CD8-positive, alpha-beta T cell (primary cell): ENCODE measurements at regions of chr16 and their contacts with region 1.

Region 1: DNA sequence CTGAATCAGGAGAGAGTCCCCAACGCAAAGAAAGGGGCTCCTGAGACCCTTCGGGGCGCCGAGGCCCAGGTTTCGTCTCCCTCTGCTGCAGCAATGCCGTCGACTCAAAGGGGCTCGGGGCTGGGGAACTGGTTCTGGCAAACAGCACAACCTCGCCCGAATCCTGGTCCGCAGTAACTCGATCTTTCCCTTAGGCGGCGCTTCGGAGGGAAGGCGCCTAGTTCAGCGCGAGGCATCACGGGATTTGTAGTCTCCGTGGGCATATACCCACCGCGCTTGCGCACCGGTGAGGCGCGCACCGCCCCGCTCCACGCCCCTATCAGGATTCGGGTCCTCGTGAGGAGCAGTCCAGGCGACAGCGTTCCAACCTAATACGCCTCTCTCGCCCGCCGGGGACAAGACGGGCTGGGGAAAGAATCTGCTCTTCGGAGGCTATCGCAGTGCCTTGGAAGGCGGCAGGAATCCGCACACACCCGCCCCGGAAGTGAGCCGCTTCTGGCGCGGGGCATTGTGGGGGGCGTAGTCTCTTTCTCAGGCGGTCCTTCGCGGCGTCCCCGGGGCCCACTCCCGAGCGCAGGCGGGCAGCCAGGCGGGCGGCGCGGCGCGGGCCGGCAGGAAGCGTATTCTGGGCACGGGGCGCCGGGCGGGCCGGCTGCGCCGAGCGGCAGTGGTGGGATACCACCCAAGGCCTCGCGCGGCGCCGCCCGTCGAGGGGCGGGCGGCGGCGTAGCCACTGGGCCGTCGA is at the start of gene THAP11:
- DNase-seq: peak; percentile 91 to 97 (median 94)
- ATAC-seq: peak; percentile 62
- H3K4me3 ChIP-seq: peak within 1 kb of the TSS; percentile 97 to 100
- H3K4me3 Mint-ChIP-seq: peak within 1 kb of the TSS; percentile 95
- H3K27ac ChIP-seq: peak within 1 kb of the TSS; percentile 53 to 99
- H3K27ac Mint-ChIP-seq: peak within 1 kb of the TSS; percentile 96
- H3K4me1 ChIP-seq: peaks cover 39% of the 10 kb centered on the region
- H3K4me1 Mint-ChIP-seq: peaks cover 41% of the 10 kb centered on the region
- H3K27me3 ChIP-seq: no peaks in the 10 kb centered on the region
- H3K27me3 Mint-ChIP-seq: no peaks in the 10 kb centered on the region
- CTCF ChIP-seq: peak; percentile 79
- total RNA-seq, gene THAP11: 25.1 to 26.0 TPM

Region 2: GRCh38 chr16:67480833-67481560 is 360.9 kb before region 1 on chr16 and contains the start of gene ATP6V0D1:
- CTCF ChIA-PET with region 1: no interaction called
- POLR2A ChIA-PET with region 1: no interaction called
- intact Hi-C with region 1: loop called in 1 of 2 experiments (anchors 1 kb)
- DNase-seq: peak; percentile 98 to 99 (median 99)
- ATAC-seq: peak; percentile 90
- H3K4me3 ChIP-seq: peak within 1 kb of the TSS; percentile 91 to 100
- H3K4me3 Mint-ChIP-seq: peak within 1 kb of the TSS; percentile 99
- H3K27ac ChIP-seq: peak within 1 kb of the TSS; percentile 96 to 100
- H3K27ac Mint-ChIP-seq: peak within 1 kb of the TSS; percentile 99
- H3K4me1 ChIP-seq: peaks cover 30% of the 10 kb centered on the region
- H3K4me1 Mint-ChIP-seq: peaks cover 49% of the 10 kb centered on the region
- H3K27me3 ChIP-seq: no peaks in the 10 kb centered on the region
- H3K27me3 Mint-ChIP-seq: no peaks in the 10 kb centered on the region
- CTCF ChIP-seq: peak; percentile 87
- total RNA-seq, gene ATP6V0D1: 56.3 to 62.0 TPM

Region 3: DNA sequence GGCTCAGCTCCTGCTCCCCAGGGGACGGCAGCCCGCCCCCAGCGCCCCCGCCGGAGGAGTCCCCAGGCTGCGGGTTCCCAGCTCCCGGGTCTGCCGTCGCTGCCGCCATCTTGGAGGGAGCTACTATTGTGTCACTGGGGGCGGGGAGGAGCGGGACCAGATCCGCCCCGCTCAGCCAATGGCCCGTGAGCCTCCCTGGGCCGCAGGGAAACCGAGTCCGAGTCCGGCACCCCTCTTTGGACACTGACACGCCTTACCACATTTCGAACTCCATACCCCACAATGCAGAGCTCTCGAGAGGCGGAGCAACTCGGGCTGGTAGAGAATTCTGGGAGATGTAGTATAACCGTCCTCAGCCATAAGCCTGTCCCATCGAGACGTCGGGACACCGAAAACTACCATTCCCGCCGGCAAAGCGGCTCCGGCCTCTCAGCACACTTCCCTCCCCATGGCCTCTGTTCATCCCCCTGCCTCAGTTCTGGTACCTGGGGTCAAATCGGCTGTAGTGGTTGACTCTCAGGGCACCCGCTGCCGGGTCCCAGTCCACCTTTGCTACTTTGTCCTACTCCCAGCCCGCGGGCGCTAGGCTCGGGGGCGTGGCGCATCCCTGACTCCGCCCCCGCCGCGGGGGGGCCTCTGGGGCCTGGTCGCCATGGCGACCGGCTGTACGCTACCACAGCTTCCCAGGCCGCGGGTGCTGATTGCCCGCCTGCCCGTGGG is 35.3 kb before region 1 on chr16 and contains the starts of genes RANBP10 and TSNAXIP1:
- CTCF ChIA-PET with region 1: interaction called, 3 read pairs
- POLR2A ChIA-PET with region 1: interaction called, 7 read pairs
- intact Hi-C with region 1: loop called (anchors 1 kb)
- DNase-seq: peak; percentile 92 to 99 (median 94)
- ATAC-seq: peak; percentile 91
- H3K4me3 ChIP-seq: peak within 1 kb of the TSS; percentile 89 to 96
- H3K4me3 Mint-ChIP-seq: peak within 1 kb of the TSS; percentile 95
- H3K27ac ChIP-seq: peak within 1 kb of the TSS; percentile 77 to 85
- H3K27ac Mint-ChIP-seq: peak within 1 kb of the TSS; percentile 91
- H3K4me1 ChIP-seq: peaks cover 35% of the 10 kb centered on the region
- H3K4me1 Mint-ChIP-seq: peaks cover 44% of the 10 kb centered on the region
- H3K27me3 ChIP-seq: no peaks in the 10 kb centered on the region
- H3K27me3 Mint-ChIP-seq: no peaks in the 10 kb centered on the region
- CTCF ChIP-seq: no peak
- total RNA-seq, gene RANBP10: 14.6 to 14.8 TPM
- total RNA-seq, gene TSNAXIP1: 0.31 to 0.41 TPM

Region 4: DNA sequence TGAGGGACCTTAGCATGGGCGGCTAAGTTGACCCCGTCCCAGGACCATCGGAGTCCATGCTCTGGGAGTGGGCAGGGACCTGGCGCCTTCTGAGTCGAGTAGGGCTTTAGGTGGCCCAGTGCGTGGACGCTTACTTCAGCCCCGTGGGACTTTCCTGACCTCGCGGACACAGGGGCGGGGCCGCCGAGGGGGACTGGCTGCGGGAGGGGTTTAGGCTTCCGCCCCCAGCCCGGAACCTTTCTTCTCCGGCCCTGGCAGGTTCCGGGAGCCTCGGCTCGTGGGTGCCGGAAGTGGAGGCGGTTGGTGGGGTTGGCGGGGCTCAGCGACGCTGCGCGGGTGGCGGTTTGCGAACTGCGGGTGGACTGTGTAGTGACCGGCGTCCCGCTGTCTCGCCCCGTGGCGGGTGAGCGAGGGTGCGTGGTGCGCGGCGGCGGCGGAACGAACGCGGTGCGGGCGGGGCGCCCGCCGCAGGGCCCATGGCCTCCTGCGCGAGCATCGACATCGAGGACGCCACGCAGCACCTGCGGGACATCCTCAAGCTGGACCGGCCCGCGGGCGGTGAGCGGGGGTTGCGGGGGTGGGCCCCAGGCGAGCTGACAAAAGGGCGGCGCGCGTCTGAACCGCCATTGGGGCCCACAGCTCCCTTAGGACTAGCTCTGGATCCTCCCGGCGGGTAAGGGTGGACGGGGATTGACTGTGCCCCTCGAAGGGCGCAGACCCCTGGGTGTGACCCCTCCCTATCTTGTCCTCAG is 31.0 kb after region 1 on chr16 and contains the start of gene EDC4:
- CTCF ChIA-PET with region 1: interaction called, 3 read pairs
- POLR2A ChIA-PET with region 1: interaction called, 5 read pairs
- intact Hi-C with region 1: loop called (anchors 1 kb)
- DNase-seq: peak; percentile 75 to 94 (median 86)
- ATAC-seq: peak; percentile 92
- H3K4me3 ChIP-seq: peak within 1 kb of the TSS; percentile 87 to 97
- H3K4me3 Mint-ChIP-seq: peak within 1 kb of the TSS; percentile 90
- H3K27ac ChIP-seq: peak within 1 kb of the TSS; percentile 78 to 83
- H3K27ac Mint-ChIP-seq: peak within 1 kb of the TSS; percentile 90
- H3K4me1 ChIP-seq: peaks cover 32% of the 10 kb centered on the region
- H3K4me1 Mint-ChIP-seq: peaks cover 32% of the 10 kb centered on the region
- H3K27me3 ChIP-seq: no peaks in the 10 kb centered on the region
- H3K27me3 Mint-ChIP-seq: no peaks in the 10 kb centered on the region
- CTCF ChIP-seq: no peak
- total RNA-seq, gene EDC4: 154 to 169 TPM

Region 5: GRCh38 chr16:68085259-68086071 is 243.5 kb after region 1 on chr16 and contains the start of gene NFATC3:
- CTCF ChIA-PET with region 1: no interaction called
- POLR2A ChIA-PET with region 1: no interaction called
- intact Hi-C with region 1: loop called in 1 of 2 experiments (anchors 2 kb)
- DNase-seq: peak; percentile 98 to 100 (median 99)
- ATAC-seq: peak; percentile 81
- H3K4me3 ChIP-seq: peak within 1 kb of the TSS; percentile 87 to 97
- H3K4me3 Mint-ChIP-seq: peak within 1 kb of the TSS; percentile 85
- H3K27ac ChIP-seq: peak within 1 kb of the TSS; percentile 72 to 91
- H3K27ac Mint-ChIP-seq: peak within 1 kb of the TSS; percentile 98
- H3K4me1 ChIP-seq: peaks cover 64% of the 10 kb centered on the region
- H3K4me1 Mint-ChIP-seq: peaks cover 64% of the 10 kb centered on the region
- H3K27me3 ChIP-seq: no peaks in the 10 kb centered on the region
- H3K27me3 Mint-ChIP-seq: no peaks in the 10 kb centered on the region
- CTCF ChIP-seq: no peak
- total RNA-seq, gene NFATC3: 79.4 to 85.2 TPM